HCT116 (cell line): ENCODE measurements at regions of chr20 and their contacts with region 1.

Region 1: GRCh38 chr20:11544029-11544678 is 373.5 kb upstream of the BTBD3 start:
- DNase-seq: peak; percentile 64
- ATAC-seq: peak; percentile 81
- H3K4me3 ChIP-seq: 0 out of 4 replicates have a peak overlapping the region, but pooled peaks of 1 of the 2 experiments have one; percentile 12
- H3K27ac ChIP-seq: no peak overlapping the region
- H3K4me1 ChIP-seq: peaks cover 8 to 18% of the 10 kb centered on the region in 2 experiments
- H3K27me3 ChIP-seq: no peaks in the 10 kb centered on the region
- CTCF ChIP-seq: peak; percentile 33 to 70 (median 56); a peak in 3 of 6 replicates
- POLR2A ChIP-seq: no peak
- RAD21 ChIP-seq: peak; percentile 88

Region 2: GRCh38 chr20:10090588-10091166 is 1453.5 kb before region 1 on chr20:
- CTCF ChIA-PET with region 1: interaction called, 3 read pairs
- POLR2A ChIA-PET with region 1: no interaction called
- RAD21 ChIA-PET with region 1: no interaction called
- intact Hi-C with region 1: loop called (anchors 10 kb)
- DNase-seq: peak; percentile 38
- ATAC-seq: peak; percentile 91
- H3K4me3 ChIP-seq: no peak overlapping the region
- H3K27ac ChIP-seq: no peak overlapping the region
- H3K4me1 ChIP-seq: peaks cover 5 to 13% of the 10 kb centered on the region in 2 experiments; a peak in 3 of 4 replicates
- H3K27me3 ChIP-seq: no peaks in the 10 kb centered on the region
- CTCF ChIP-seq: peak; percentile 51 to 76 (median 73); a peak in 5 of 6 replicates
- POLR2A ChIP-seq: no peak
- RAD21 ChIP-seq: peak; percentile 80

Region 3: DNA sequence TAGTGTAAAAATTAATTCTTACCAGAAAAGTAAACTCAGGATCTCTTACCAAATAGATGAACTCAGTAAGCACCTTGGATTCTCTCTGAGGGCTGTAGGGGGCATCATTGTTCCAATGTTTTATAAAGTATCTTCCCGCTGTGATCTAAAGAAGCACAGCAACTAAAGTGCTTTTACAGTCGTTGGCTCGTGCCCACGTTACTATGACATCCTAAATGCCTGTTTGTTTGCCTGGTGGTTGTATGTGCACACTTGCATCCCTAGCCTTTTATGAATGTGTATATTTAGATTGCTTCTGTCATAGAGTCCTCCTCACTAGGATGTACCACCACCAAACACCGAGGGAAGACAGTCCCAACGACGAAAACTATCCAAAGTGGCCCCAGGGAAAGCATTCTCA is 1074.6 kb before region 1 on chr20:
- CTCF ChIA-PET with region 1: no interaction called
- POLR2A ChIA-PET with region 1: no interaction called
- RAD21 ChIA-PET with region 1: no interaction called
- intact Hi-C with region 1: loop called (anchors 1 kb)
- DNase-seq: peak; percentile 46
- ATAC-seq: peak; percentile 80
- H3K4me3 ChIP-seq: no peak overlapping the region
- H3K27ac ChIP-seq: peak overlapping the region; percentile 7
- H3K4me1 ChIP-seq: peaks cover 41 to 43% of the 10 kb centered on the region in 2 experiments
- H3K27me3 ChIP-seq: no peaks in the 10 kb centered on the region
- CTCF ChIP-seq: peak; percentile 38 to 68 (median 66); a peak in 5 of 6 replicates
- POLR2A ChIP-seq: no peak
- RAD21 ChIP-seq: peak; percentile 70

Region 4: DNA sequence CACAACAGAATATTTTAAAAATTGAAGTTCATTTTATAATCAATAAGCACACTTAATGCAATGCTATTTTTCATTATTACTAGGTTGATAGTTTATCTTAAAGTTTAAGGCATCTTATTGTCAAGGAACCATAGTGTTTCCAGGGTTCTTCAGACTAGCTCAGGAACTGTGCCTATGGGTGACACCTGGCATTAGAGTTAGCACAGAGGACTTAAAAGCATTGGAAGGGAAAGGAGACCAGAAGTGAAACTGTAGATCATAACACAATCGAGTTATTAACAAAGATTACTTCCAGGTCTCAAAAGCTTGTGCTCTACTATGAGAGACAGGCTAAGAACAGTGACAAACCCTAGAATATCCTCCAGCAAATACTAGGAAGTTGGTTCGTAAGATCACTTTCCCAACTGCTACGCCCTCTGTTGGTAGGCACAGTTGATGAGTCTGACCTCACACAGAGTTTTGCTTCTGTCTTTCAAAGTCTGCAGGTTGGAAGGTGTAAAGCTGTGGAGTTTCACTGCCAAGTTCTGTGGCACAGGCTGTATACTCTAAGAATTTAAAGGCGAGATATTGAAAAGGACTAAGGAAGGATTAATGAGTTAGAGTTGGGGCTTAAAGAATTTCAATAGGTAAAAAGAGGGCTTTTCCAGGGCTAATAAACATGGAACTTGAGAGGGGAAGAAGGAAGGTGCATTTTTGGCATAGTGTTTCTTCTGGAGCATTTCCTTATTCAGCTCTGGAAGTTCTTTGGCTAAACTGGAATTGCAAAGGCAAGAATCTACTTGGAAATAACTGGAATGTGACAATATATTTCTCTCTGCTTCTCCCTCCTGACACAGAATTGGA is 339.0 kb before region 1 on chr20:
- CTCF ChIA-PET with region 1: no interaction called
- POLR2A ChIA-PET with region 1: no interaction called
- RAD21 ChIA-PET with region 1: interaction called in 1 of 2 experiments, 3 read pairs
- intact Hi-C with region 1: loop called (anchors 1 kb)
- DNase-seq: peak; percentile 73
- ATAC-seq: peak; percentile 76
- H3K4me3 ChIP-seq: no peak overlapping the region
- H3K27ac ChIP-seq: no peak overlapping the region
- H3K4me1 ChIP-seq: peaks cover 22 to 29% of the 10 kb centered on the region in 2 experiments
- H3K27me3 ChIP-seq: no peaks in the 10 kb centered on the region
- CTCF ChIP-seq: peak; percentile 50 to 95 (median 91); a peak in 5 of 6 replicates
- POLR2A ChIP-seq: no peak
- RAD21 ChIP-seq: peak; percentile 74

Region 5: DNA sequence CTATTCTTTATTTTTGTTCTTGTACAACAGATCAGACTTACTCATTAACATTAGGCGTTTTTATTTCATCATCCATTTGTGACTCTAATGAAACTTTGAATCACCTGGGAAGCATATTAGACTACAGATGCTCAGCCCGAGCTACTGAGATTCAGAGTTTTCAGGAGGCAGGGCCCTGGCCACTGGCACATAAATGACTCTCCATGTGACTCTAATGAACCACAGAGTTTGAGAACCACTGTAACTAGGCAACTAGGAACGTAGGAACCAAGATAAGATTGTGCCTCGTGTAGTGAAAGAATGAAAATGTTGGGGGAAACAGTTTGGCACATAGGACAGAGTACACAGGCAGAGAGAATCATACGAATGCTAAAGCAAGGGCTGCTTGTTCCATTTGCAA is 32.3 kb before region 1 on chr20:
- CTCF ChIA-PET with region 1: no interaction called
- POLR2A ChIA-PET with region 1: no interaction called
- RAD21 ChIA-PET with region 1: no interaction called
- intact Hi-C with region 1: no loop called
- DNase-seq: no peak
- ATAC-seq: no peak
- H3K4me3 ChIP-seq: no peak overlapping the region
- H3K27ac ChIP-seq: no peak overlapping the region
- H3K4me1 ChIP-seq: no peaks in the 10 kb centered on the region
- H3K27me3 ChIP-seq: no peaks in the 10 kb centered on the region
- CTCF ChIP-seq: no peak
- POLR2A ChIP-seq: no peak
- RAD21 ChIP-seq: no peak

Region 6: GRCh38 chr20:13212750-13213149 is 1668.6 kb after region 1 on chr20:
- CTCF ChIA-PET with region 1: no interaction called
- POLR2A ChIA-PET with region 1: no interaction called
- RAD21 ChIA-PET with region 1: no interaction called
- intact Hi-C with region 1: no loop called
- DNase-seq: no peak
- ATAC-seq: no peak
- H3K4me3 ChIP-seq: no peak overlapping the region
- H3K27ac ChIP-seq: no peak overlapping the region
- H3K4me1 ChIP-seq: no peaks in the 10 kb centered on the region
- H3K27me3 ChIP-seq: peaks cover 35% of the 10 kb centered on the region
- CTCF ChIP-seq: no peak
- POLR2A ChIP-seq: no peak
- RAD21 ChIP-seq: no peak